HEK293 (cell line): ENCODE measurements at regions of chr7 and their contacts with region 1.

Region 1: DNA sequence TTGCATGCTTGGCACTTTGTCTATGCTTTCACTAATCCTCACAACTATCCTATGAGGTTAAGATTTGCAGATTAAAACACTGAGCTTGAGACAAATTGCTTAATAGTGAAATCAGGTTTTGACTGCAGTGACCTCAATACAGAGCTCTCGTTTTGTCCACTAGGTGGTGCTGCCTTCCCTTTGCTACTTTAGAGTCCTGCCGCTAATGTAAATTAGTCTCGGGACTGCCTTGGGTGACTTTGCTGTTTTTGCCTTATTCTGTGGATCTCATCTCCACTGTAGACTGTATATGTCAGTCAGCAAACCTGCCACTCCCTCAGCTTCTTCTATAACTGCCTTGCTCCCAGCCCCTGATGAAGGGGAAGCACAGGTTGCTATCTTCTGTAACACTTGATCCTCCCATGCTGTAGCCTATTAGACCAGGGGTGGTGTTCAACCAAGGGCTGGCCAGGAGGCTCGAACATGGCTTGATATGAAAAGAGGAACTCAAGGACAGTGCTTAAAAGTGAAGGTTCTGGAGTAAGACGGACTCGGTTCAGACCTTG is 26.0 kb downstream of the ASB4 start:
- H3K4me3 ChIP-seq: no peak overlapping the region
- H3K27ac ChIP-seq: no peak overlapping the region
- H3K4me1 ChIP-seq: no peaks in the 10 kb centered on the region
- CTCF ChIP-seq: peak; percentile 62

Region 2: GRCh38 chr7:95441042-95441823 is 70.6 kb before region 1 on chr7:
- CTCF ChIA-PET with region 1: no interaction called
- POLR2A ChIA-PET with region 1: no interaction called
- H3K4me3 ChIP-seq: no peak overlapping the region
- H3K27ac ChIP-seq: no peak overlapping the region
- H3K4me1 ChIP-seq: no peaks in the 10 kb centered on the region
- CTCF ChIP-seq: no peak

Region 3: GRCh38 chr7:95491634-95492320 is 20.0 kb before region 1 on chr7:
- CTCF ChIA-PET with region 1: interaction called, 16 read pairs
- POLR2A ChIA-PET with region 1: no interaction called
- H3K4me3 ChIP-seq: no peak overlapping the region
- H3K27ac ChIP-seq: no peak overlapping the region
- H3K4me1 ChIP-seq: peaks cover 5% of the 10 kb centered on the region; the same call in 1 of the 2 replicates
- CTCF ChIP-seq: no peak

Region 4: GRCh38 chr7:95501261-95501832 is 10.4 kb before region 1 on chr7:
- CTCF ChIA-PET with region 1: interaction called, 29 read pairs
- POLR2A ChIA-PET with region 1: no interaction called
- H3K4me3 ChIP-seq: no peak overlapping the region
- H3K27ac ChIP-seq: no peak overlapping the region
- H3K4me1 ChIP-seq: 0 out of 2 replicates have a peak, but pooled peaks cover 4% of the 10 kb centered on the region
- CTCF ChIP-seq: no peak

Region 5: DNA sequence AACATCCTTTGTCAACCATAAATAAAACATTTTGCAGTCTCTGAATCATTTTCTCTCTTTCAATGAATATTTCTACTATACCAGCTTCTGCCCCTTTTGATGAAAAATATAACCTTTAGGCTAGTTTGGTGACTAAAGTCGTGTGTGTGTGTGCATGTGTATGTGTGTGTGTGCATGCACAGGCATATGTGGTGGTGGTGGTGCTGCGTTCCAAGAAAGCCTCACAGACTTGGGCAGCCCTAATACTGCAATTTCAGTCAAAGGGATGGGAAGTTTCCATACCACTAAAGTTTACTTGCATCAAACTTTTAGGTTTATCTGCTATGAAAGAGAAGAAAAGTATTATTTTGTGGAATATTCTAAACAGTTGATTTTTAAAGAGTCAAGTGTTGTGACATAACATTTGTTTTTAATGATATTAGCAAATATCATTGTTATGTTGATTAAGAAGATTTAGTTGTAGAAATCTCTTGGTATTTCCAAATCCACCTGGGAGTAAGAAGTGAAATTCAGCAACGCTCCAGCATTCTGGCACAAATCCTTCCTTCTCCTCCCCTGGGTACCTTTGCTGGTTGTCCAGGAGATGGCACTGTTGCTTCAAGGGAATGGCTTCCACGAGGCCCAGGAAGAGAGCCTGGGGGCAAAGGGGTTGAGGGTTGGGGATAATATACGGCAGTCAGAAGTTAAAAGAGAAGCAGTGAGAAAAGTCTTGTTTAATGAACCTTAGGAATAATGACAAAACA is 15.4 kb after region 1 on chr7:
- CTCF ChIA-PET with region 1: interaction called, 68 read pairs
- POLR2A ChIA-PET with region 1: no interaction called
- H3K4me3 ChIP-seq: no peak overlapping the region
- H3K27ac ChIP-seq: no peak overlapping the region
- H3K4me1 ChIP-seq: no peaks in the 10 kb centered on the region
- CTCF ChIP-seq: peak; percentile 75

Region 6: DNA sequence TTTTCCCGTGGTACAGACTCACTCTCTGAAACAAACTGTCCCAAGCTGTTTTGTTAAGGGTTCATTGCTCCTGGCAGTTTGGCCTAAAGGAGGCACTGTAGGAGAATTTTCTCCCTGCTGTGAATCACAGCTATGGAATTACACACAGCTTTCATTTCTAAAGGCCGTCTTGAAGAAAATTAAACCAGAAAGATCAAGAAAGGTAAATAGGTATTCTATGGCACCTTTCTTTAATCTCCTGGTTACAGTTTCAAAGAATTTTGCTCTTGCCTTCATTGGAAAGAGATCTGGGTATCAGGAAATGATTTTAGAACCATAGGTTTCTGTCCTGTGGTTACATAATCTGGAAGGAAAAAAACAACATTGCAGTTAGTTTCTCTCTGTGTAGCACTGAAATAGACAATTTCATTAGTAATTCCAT is 33.3 kb after region 1 on chr7:
- CTCF ChIA-PET with region 1: interaction called, 15 read pairs
- POLR2A ChIA-PET with region 1: no interaction called
- H3K4me3 ChIP-seq: no peak overlapping the region
- H3K27ac ChIP-seq: no peak overlapping the region
- H3K4me1 ChIP-seq: peaks cover 11% of the 10 kb centered on the region
- CTCF ChIP-seq: no peak

Region 7: DNA sequence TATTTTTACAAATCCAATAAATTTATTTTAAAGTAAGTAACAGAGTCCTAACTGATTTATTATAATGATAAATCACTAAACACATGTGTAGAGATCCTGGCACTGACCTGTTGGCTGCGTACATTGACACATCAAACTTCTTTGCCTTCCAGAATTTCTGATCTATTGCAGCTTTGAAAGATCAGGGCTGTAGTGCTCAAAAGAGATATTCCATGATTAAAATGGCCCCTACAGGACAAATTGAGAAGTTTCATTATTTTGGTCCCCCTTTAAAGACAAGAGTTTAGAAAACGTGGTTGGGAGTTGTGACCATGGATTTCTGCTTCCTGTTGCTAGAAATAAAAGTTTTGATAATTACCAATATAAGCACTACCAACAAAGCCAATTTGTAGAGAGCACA is 172.2 kb after region 1 on chr7:
- CTCF ChIA-PET with region 1: interaction called, 169 read pairs
- POLR2A ChIA-PET with region 1: interaction called, 7 read pairs
- H3K4me3 ChIP-seq: no peak overlapping the region
- H3K27ac ChIP-seq: no peak overlapping the region
- H3K4me1 ChIP-seq: no peaks in the 10 kb centered on the region
- CTCF ChIP-seq: peak; percentile 31; the same call in 1 of the 2 replicates